Heart left ventricle (tissue), 16 donors: ENCODE measurements at regions of chr15 and their contacts with region 1.

Region 1: GRCh38 chr15:66955871-66956585 is 109.4 kb upstream of the SMAD3 start:
- DNase-seq: no peak
- ATAC-seq: no peak
- H3K4me3 ChIP-seq: no peak overlapping the region
- H3K27ac ChIP-seq: no peak overlapping the region
- H3K4me1 ChIP-seq: peaks cover 0 to 25% (median 0%) of the 10 kb centered on the region in 12 donors
- H3K27me3 ChIP-seq: no peaks in the 10 kb centered on the region
- CTCF ChIP-seq: no peak
- POLR2A ChIP-seq: no peak

Region 2: GRCh38 chr15:67013696-67014095 is 57.7 kb after region 1 on chr15:
- intact Hi-C with region 1: loop called in 1 of 10 experiments (anchors 10 kb)
- DNase-seq: peak in 4 of 5 donors; percentile 71 to 74 (median 73)
- ATAC-seq: peak; percentile 79 to 93 (median 82)
- H3K4me3 ChIP-seq: no peak overlapping the region
- H3K27ac ChIP-seq: peak overlapping the region in 11 of 12 donors; percentile 5 to 69 (median 47)
- H3K4me1 ChIP-seq: peaks cover 0 to 35% (median 9%) of the 10 kb centered on the region in 12 donors
- H3K27me3 ChIP-seq: no peaks in the 10 kb centered on the region
- CTCF ChIP-seq: no peak
- POLR2A ChIP-seq: no peak